Activated CD4-positive, alpha-beta memory T cell treated with anti-CD3 and anti-CD28 coated beads for 36 hours (primary cell): ENCODE measurements at regions of chr5 and their contacts with region 1.

Region 1: GRCh38 chr5:97009212-97009898 is 73.5 kb downstream of the LNPEP start:
- DNase-seq: no peak
- H3K4me3 Mint-ChIP-seq: no peak overlapping the region
- H3K27ac Mint-ChIP-seq: peak overlapping the region; percentile 47
- H3K4me1 Mint-ChIP-seq: peaks cover 19% of the 10 kb centered on the region
- H3K27me3 Mint-ChIP-seq: no peaks in the 10 kb centered on the region

Region 2: GRCh38 chr5:96885518-96886338 is 123.6 kb before region 1 on chr5:
- CTCF ChIA-PET with region 1: no interaction called
- POLR2A ChIA-PET with region 1: no interaction called
- intact Hi-C with region 1: no loop called
- DNase-seq: peak; percentile 50
- H3K4me3 Mint-ChIP-seq: peak overlapping the region; percentile 35
- H3K27ac Mint-ChIP-seq: peak overlapping the region; percentile 87
- H3K4me1 Mint-ChIP-seq: peaks cover 57% of the 10 kb centered on the region
- H3K27me3 Mint-ChIP-seq: no peaks in the 10 kb centered on the region

Region 3: GRCh38 chr5:96957254-96958049 is 51.9 kb before region 1 on chr5:
- CTCF ChIA-PET with region 1: no interaction called
- POLR2A ChIA-PET with region 1: no interaction called
- intact Hi-C with region 1: loop called (anchors 1 kb)
- DNase-seq: peak; percentile 72
- H3K4me3 Mint-ChIP-seq: peak overlapping the region; percentile 61
- H3K27ac Mint-ChIP-seq: peak overlapping the region; percentile 74
- H3K4me1 Mint-ChIP-seq: peaks cover 79% of the 10 kb centered on the region
- H3K27me3 Mint-ChIP-seq: no peaks in the 10 kb centered on the region

Region 4: GRCh38 chr5:96978812-96979449 is 30.4 kb before region 1 on chr5:
- CTCF ChIA-PET with region 1: no interaction called
- POLR2A ChIA-PET with region 1: no interaction called
- intact Hi-C with region 1: no loop called
- DNase-seq: no peak
- H3K4me3 Mint-ChIP-seq: no peak overlapping the region
- H3K27ac Mint-ChIP-seq: no peak overlapping the region
- H3K4me1 Mint-ChIP-seq: peaks cover 33% of the 10 kb centered on the region
- H3K27me3 Mint-ChIP-seq: no peaks in the 10 kb centered on the region

Region 5: DNA sequence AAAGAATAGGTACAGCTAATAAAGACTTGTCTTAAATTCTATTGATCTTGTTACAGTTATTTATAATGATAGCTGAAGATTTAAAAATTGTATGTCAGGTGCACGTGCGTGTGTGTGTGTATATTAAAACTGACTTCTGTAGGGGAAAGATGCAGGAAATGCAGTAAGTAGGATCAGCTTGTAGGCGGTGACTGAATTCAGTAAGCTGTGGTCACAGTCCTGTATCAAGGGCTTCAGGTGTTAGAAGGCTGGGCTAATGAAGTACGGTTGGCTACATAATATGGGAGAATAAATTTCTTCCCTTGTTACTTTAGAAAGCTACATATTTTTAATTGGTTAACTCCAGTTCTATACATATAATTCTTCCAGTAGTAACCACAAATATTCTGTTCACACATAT is 19.3 kb before region 1 on chr5:
- CTCF ChIA-PET with region 1: interaction called, 3 read pairs
- POLR2A ChIA-PET with region 1: no interaction called
- intact Hi-C with region 1: loop called (anchors 2 kb)
- DNase-seq: no peak
- H3K4me3 Mint-ChIP-seq: no peak overlapping the region
- H3K27ac Mint-ChIP-seq: no peak overlapping the region
- H3K4me1 Mint-ChIP-seq: peaks cover 33% of the 10 kb centered on the region
- H3K27me3 Mint-ChIP-seq: no peaks in the 10 kb centered on the region

Region 6: GRCh38 chr5:97042996-97043395 is 33.6 kb after region 1 on chr5:
- CTCF ChIA-PET with region 1: no interaction called
- POLR2A ChIA-PET with region 1: no interaction called
- intact Hi-C with region 1: no loop called
- DNase-seq: no peak
- H3K4me3 Mint-ChIP-seq: no peak overlapping the region
- H3K27ac Mint-ChIP-seq: no peak overlapping the region
- H3K4me1 Mint-ChIP-seq: no peaks in the 10 kb centered on the region
- H3K27me3 Mint-ChIP-seq: no peaks in the 10 kb centered on the region

Region 7: DNA sequence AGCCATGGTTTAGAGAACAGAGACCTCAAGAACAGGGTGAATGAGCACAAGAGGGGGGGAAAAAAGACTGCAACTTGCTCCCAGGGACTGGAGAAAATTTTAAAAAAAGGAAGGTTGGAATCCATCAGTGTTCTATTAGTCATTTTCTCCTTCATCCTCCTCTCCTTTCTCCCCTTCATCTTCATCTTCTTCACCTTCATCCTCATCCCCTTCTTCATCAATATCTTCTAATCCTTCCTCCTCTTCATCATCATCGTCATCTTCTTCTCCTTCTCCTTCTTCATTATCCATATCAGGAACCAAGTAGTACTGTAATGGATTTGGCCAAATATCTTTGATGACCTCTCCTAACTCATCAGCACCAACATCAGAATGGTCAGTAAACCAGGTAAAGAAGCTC is 46.9 kb after region 1 on chr5:
- CTCF ChIA-PET with region 1: no interaction called
- POLR2A ChIA-PET with region 1: no interaction called
- intact Hi-C with region 1: no loop called
- DNase-seq: no peak
- H3K4me3 Mint-ChIP-seq: no peak overlapping the region
- H3K27ac Mint-ChIP-seq: no peak overlapping the region
- H3K4me1 Mint-ChIP-seq: no peaks in the 10 kb centered on the region
- H3K27me3 Mint-ChIP-seq: no peaks in the 10 kb centered on the region